ENCODE measurements at regions of chr2 and their contacts with region 1.

Region 1: DNA sequence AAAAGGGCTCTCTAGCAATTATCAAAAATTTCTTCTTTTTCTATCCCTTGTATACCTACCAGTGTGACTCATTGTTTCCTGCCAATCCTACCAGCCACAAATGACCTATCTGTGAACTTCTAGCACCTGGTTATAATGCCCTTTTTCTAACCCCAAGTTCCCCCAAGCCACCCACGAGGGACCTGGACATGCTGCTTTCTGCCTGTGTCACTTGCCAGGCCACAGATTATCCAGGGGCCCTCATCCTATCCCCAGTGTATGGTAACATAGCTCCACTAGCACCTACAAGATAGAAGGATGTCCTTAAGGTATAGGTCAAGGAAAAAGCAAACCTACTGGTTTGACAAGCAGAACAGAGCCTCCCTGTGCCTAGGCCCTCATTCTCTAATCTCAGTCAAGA is 26.8 kb downstream of the AAK1 start:
- DNase-seq: peak; percentile 63
- ATAC-seq: peak; percentile 70
- H3K4me3 ChIP-seq: no peak overlapping the region
- H3K27ac ChIP-seq: no peak overlapping the region
- H3K4me1 ChIP-seq: peaks cover 34% of the 10 kb centered on the region
- H3K27me3 ChIP-seq: no peaks in the 10 kb centered on the region
- CTCF ChIP-seq: no peak

Region 2: GRCh38 chr2:69559442-69560146 is 57.2 kb before region 1 on chr2:
- CTCF ChIA-PET with region 1: no interaction called
- POLR2A ChIA-PET with region 1: no interaction called
- intact Hi-C with region 1: no loop called
- DNase-seq: peak; percentile 80
- ATAC-seq: peak; percentile 72
- H3K4me3 ChIP-seq: no peak overlapping the region
- H3K27ac ChIP-seq: no peak overlapping the region
- H3K4me1 ChIP-seq: peaks cover 16% of the 10 kb centered on the region; the same call in 1 of the 2 replicates
- H3K27me3 ChIP-seq: no peaks in the 10 kb centered on the region
- CTCF ChIP-seq: peak; percentile 93

Region 3: DNA sequence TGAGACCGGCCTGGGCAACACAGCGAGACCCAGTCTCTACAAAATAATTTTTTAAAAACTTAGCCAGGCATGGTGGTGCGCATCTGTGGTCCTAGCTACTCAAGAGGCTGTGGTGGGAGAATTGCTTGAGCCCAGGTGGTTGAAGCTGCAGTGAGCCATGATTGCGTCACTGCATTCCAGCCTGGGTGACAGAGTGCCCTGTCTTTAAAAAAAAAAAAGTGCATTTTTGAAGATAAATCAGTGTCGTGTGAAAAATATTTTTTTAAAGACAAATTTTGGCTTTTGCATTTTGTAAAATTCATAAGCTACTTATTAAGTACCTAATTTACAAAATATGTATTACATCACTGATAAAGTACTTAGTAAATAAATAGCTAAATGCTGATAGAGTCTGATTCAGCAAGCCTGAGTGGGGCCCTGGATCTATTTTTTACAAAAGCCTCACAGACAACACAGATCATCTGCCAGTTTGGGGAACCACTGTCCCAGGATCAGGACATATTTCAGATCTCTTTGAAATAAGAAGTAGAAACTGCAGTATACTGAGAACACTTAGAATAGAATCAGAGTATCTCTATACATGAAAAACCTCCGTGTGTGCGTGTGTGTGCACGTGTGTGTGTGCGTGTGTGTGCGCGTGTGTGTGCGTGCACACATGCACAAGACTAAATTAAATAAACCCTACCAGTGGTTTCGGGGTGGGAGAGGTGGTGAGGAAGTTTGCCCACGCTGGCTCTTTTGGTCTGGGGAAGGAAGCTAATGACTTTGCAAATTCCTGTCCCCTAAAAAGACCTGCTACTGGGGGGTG is 34.8 kb before region 1 on chr2:
- CTCF ChIA-PET with region 1: no interaction called
- POLR2A ChIA-PET with region 1: no interaction called
- intact Hi-C with region 1: loop called (anchors 5 kb)
- DNase-seq: peak; percentile 70
- ATAC-seq: peak; percentile 37
- H3K4me3 ChIP-seq: no peak overlapping the region
- H3K27ac ChIP-seq: no peak overlapping the region
- H3K4me1 ChIP-seq: peaks cover 23% of the 10 kb centered on the region
- H3K27me3 ChIP-seq: no peaks in the 10 kb centered on the region
- CTCF ChIP-seq: no peak